Right ventricle myocardium inferior (tissue), 1 donor: ENCODE measurements at regions of chr16 and their contacts with region 1.

Region 1: GRCh38 chr16:15672514-15673167 is 22.6 kb downstream of the NDE1 start:
- DNase-seq: peak; percentile 95
- ATAC-seq: peak; percentile 99

Region 2: DNA sequence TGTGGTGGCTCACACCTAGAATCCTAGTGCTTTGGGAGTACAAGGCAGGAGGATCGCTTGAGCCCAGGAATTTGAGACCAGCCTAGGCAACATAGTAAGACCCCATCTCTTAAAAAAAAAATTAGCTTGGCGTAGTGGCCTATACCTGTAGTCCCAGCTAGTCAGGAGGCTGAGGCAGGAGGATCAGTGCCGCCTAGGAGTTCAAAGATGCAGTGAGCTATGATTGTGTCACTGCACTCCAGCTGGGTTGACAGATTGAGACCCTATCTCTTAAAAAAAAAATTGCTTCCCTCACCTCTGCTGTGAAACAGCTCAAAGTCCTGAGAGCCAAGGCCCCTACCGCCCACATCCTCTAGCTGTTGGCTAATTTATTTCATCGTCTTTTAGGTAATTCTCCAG is 12.4 kb before region 1 on chr16:
- intact Hi-C with region 1: loop called (anchors 1 kb)
- DNase-seq: no peak
- ATAC-seq: no peak